B cell (primary cell): ENCODE measurements at regions of chr18 and their contacts with region 1.

Region 1: DNA sequence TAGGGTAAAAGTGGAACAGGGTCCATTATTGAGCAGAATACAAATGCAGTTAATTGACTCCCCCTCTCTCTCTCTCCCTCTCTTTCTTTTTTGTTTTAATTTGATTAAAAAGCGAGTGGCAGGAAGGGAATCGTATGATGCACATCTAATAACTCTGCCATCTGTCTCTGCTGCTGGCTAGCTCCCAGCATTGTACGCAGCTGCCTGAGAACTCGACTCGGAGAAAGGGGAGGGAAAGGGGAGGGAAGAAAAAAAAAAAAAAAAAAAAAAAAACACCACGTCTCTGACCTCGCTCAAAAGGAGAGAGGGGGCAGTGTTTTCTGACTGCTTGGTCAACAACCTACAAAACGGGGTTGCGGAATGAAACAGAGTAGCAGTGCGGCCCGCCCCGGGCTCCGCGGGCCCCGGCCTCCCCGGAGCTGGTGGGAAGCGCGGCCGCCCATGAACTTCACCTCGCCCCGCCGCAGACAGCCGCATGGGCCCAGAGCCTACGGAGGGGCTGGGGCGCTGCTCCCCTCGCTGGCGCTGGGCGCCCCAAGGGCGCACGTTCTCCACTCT is 265.7 kb downstream of the TCF4 start:
- DNase-seq: peak; percentile 83
- ATAC-seq: peak; percentile 63
- H3K4me3 ChIP-seq: peak overlapping the region; percentile 79 to 97 (median 84)
- H3K4me3 Mint-ChIP-seq: peak overlapping the region; percentile 96
- H3K27ac ChIP-seq: peak overlapping the region; percentile 85 to 93
- H3K27ac Mint-ChIP-seq: peak overlapping the region; percentile 92
- H3K4me1 ChIP-seq: peaks cover 36 to 59% of the 10 kb centered on the region in 2 donors
- H3K4me1 Mint-ChIP-seq: peaks cover 62% of the 10 kb centered on the region
- H3K27me3 ChIP-seq: no peaks in the 10 kb centered on the region
- H3K27me3 Mint-ChIP-seq: no peaks in the 10 kb centered on the region
- CTCF ChIP-seq: no peak

Region 2: DNA sequence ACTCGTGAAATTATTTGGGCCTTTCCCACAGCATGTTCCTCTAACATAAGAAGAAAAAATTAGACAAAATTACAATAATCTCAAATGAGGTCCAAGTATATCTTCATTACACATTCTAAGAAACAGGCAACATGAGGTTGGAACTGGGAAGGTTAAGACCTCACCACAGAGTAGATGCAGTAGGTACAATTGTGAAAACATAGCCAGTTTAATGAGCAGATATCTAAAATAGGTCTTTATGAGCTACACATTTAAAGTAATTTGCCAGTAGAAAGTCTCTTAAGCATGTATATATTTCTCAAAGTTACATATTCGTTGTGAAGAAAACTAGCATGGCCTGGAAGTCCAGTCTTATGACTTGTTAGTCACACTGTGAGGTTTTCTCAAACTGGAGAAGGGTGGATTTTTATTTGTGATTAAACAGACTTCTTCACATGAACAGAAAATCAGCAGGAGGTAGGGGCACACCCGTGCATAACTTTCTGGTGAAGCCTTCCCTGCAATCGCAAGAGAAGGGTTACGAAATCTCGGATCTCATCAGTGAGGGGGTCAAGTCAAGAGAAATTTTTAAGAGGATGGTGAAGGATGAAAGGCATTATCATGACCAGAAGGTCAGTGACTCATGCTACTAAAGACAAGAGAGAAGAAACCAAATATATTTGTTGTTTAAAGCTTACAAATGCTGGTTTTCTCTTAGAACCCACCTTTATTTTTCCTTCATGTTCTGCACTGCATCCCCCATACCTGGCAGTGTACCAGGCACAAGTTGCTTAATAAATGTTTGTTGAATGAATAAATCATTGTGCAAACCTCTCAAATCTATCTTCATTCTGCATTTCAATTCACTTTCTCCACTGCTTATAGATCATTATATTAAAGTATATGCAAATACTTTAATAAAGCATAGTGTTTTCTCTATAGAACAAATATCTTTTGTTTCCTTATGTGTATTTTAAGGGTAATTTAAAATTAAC is 499.1 kb before region 1 on chr18:
- CTCF ChIA-PET with region 1: no interaction called
- POLR2A ChIA-PET with region 1: no interaction called
- intact Hi-C with region 1: no loop called
- DNase-seq: no peak
- ATAC-seq: no peak
- H3K4me3 ChIP-seq: no peak overlapping the region
- H3K4me3 Mint-ChIP-seq: no peak overlapping the region
- H3K27ac ChIP-seq: no peak overlapping the region
- H3K27ac Mint-ChIP-seq: no peak overlapping the region
- H3K4me1 ChIP-seq: peaks cover 1% of the 10 kb centered on the region in 2 donors
- H3K4me1 Mint-ChIP-seq: peaks cover 1% of the 10 kb centered on the region
- H3K27me3 ChIP-seq: peaks cover 0 to 2% (median 1%) of the 10 kb centered on the region in 4 experiments
- H3K27me3 Mint-ChIP-seq: peaks cover 7% of the 10 kb centered on the region
- CTCF ChIP-seq: no peak

Region 3: DNA sequence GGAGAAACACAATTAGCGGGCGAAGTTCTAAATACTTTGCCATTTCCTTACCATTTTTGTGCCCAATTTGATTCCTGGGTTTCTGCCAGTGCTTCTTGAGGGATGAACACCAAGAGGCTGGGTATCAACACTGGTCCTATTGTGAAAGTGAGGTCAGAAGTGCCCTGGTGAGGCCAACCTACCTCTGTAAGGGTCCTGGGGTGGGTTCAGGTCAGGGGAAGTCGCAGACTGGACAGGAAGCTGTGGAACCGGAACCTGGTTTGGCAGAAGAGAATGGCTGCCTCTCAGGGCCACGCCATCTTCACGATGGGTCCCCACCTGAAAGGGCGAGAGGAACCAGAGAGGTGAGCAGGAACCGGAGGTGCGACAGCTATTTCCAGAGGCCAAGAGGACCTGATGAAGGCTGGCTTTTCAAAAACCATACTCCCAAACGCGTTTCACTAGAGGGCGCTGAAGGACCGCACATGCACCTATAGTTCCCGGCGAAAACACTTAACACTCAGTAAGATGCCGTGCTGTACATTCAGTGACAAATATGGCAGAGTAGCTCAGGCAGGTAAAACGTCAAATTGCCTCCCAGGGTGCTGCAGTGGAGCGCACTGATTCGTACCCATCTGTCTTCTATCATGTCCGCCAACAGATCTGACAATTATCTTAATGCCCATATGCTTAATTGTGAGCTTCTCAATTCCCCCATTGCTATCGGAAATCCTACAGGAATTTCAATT is 87.7 kb before region 1 on chr18:
- CTCF ChIA-PET with region 1: interaction called, 12 read pairs
- POLR2A ChIA-PET with region 1: interaction called, 3 read pairs
- intact Hi-C with region 1: no loop called
- DNase-seq: peak; percentile 85
- ATAC-seq: peak; percentile 75
- H3K4me3 ChIP-seq: no peak overlapping the region
- H3K4me3 Mint-ChIP-seq: peak overlapping the region; percentile 24
- H3K27ac ChIP-seq: peak overlapping the region in 1 of 2 donors; percentile 73
- H3K27ac Mint-ChIP-seq: peak overlapping the region; percentile 90
- H3K4me1 ChIP-seq: peaks cover 10 to 17% of the 10 kb centered on the region in 2 donors
- H3K4me1 Mint-ChIP-seq: peaks cover 39% of the 10 kb centered on the region
- H3K27me3 ChIP-seq: no peaks in the 10 kb centered on the region
- H3K27me3 Mint-ChIP-seq: no peaks in the 10 kb centered on the region
- CTCF ChIP-seq: peak; percentile 91

Region 4: GRCh38 chr18:55307505-55307904 is 14.8 kb before region 1 on chr18:
- CTCF ChIA-PET with region 1: interaction called, 26 read pairs
- POLR2A ChIA-PET with region 1: interaction called, 3 read pairs
- intact Hi-C with region 1: loop called (anchors 2 kb)
- DNase-seq: no peak
- ATAC-seq: no peak
- H3K4me3 ChIP-seq: peak overlapping the region in 1 of 5 experiments; percentile 18
- H3K4me3 Mint-ChIP-seq: peak overlapping the region; percentile 62
- H3K27ac ChIP-seq: peak overlapping the region in 1 of 2 donors; percentile 30
- H3K27ac Mint-ChIP-seq: no peak overlapping the region
- H3K4me1 ChIP-seq: peaks cover 54 to 78% of the 10 kb centered on the region in 2 donors
- H3K4me1 Mint-ChIP-seq: peaks cover 88% of the 10 kb centered on the region
- H3K27me3 ChIP-seq: no peaks in the 10 kb centered on the region
- H3K27me3 Mint-ChIP-seq: no peaks in the 10 kb centered on the region
- CTCF ChIP-seq: no peak

Region 5: GRCh38 chr18:55376387-55376786 is 54.1 kb after region 1 on chr18:
- CTCF ChIA-PET with region 1: interaction called, 3 read pairs
- POLR2A ChIA-PET with region 1: interaction called, 6 read pairs
- intact Hi-C with region 1: loop called (anchors 1 kb)
- DNase-seq: peak; percentile 76
- ATAC-seq: peak; percentile 92
- H3K4me3 ChIP-seq: no peak overlapping the region
- H3K4me3 Mint-ChIP-seq: peak overlapping the region; percentile 44
- H3K27ac ChIP-seq: peak overlapping the region; percentile 62 to 73
- H3K27ac Mint-ChIP-seq: peak overlapping the region; percentile 64
- H3K4me1 ChIP-seq: peaks cover 13 to 21% of the 10 kb centered on the region in 2 donors
- H3K4me1 Mint-ChIP-seq: peaks cover 30% of the 10 kb centered on the region
- H3K27me3 ChIP-seq: no peaks in the 10 kb centered on the region
- H3K27me3 Mint-ChIP-seq: no peaks in the 10 kb centered on the region
- CTCF ChIP-seq: no peak

Region 6: GRCh38 chr18:56257205-56257604 is 934.9 kb after region 1 on chr18:
- CTCF ChIA-PET with region 1: no interaction called
- POLR2A ChIA-PET with region 1: no interaction called
- intact Hi-C with region 1: loop called (anchors 10 kb)
- DNase-seq: no peak
- ATAC-seq: peak; percentile 45
- H3K4me3 ChIP-seq: no peak overlapping the region
- H3K4me3 Mint-ChIP-seq: peak overlapping the region; percentile 18
- H3K27ac ChIP-seq: no peak overlapping the region
- H3K27ac Mint-ChIP-seq: peak overlapping the region; percentile 18
- H3K4me1 ChIP-seq: peaks cover 15 to 17% of the 10 kb centered on the region in 2 donors
- H3K4me1 Mint-ChIP-seq: peaks cover 18% of the 10 kb centered on the region
- H3K27me3 ChIP-seq: no peaks in the 10 kb centered on the region
- H3K27me3 Mint-ChIP-seq: no peaks in the 10 kb centered on the region
- CTCF ChIP-seq: no peak

Region 7: GRCh38 chr18:56606618-56607017 is 1284.4 kb after region 1 on chr18:
- CTCF ChIA-PET with region 1: no interaction called
- POLR2A ChIA-PET with region 1: no interaction called
- intact Hi-C with region 1: no loop called
- DNase-seq: no peak
- ATAC-seq: no peak
- H3K4me3 ChIP-seq: no peak overlapping the region
- H3K4me3 Mint-ChIP-seq: no peak overlapping the region
- H3K27ac ChIP-seq: no peak overlapping the region
- H3K27ac Mint-ChIP-seq: no peak overlapping the region
- H3K4me1 ChIP-seq: no peaks in the 10 kb centered on the region
- H3K4me1 Mint-ChIP-seq: no peaks in the 10 kb centered on the region
- H3K27me3 ChIP-seq: no peaks in the 10 kb centered on the region
- H3K27me3 Mint-ChIP-seq: no peaks in the 10 kb centered on the region
- CTCF ChIP-seq: no peak